ENCODE measurements at regions of chr4 and their contacts with region 1.

Region 1: GRCh38 chr4:82430193-82430963 is at the starts of genes ENOPH1 and HNRNPDL:
- DNase-seq: peak; percentile 98
- ATAC-seq: peak; percentile 91
- total RNA-seq, gene ENOPH1: 12.8 TPM
- total RNA-seq, gene HNRNPDL: 104 TPM

Region 2: GRCh38 chr4:82217986-82218715 is 212.2 kb before region 1 on chr4:
- intact Hi-C with region 1: no loop called
- DNase-seq: no peak
- ATAC-seq: no peak

Region 3: DNA sequence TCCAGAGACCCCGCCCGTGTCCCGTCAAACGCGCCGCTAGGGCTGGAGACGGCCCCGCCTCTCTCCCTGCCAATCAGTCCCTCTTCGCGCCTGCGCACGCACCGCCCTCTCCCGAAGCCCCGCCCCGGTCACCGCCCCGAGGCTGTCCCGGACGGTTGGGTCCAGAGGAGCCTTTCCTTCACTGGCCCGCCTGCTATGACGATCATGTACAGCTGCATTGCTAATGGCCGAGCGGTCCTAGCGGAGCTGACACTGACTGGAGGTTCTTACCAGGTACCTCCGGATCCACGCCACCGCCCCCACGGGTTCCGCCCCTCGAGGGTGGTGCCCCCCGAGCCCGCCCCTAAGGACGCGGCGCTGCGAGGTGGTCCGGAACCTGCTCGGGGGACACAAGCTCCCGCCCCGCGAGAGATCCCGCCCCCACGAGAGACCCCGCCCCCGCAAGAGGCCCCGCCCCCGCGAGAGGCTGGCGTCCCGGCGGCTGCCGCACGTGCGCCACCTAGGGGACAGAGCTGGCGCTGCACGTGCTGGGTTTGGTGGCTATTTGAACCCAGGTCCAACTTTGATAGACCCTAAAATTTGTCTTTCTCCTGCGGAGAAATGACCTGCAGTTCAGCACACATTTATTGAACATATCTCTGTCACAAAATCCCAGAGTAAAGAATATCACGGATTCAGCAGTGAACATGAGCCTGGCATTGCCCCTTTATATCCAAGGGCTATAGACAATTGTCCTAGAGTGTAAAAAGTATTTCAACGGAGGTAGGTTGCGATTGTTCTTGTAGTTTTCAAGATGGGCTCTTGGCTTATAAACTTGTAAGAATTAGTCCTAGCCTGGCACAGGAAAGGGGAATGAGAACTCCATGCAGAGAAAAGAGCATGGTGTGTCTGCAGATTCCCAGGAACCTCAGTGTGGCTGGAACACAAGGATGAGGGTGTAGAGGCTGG is 145.2 kb before region 1 on chr4:
- intact Hi-C with region 1: loop called (anchors 10 kb)
- DNase-seq: peak; percentile 99
- ATAC-seq: peak; percentile 99

Region 4: GRCh38 chr4:82373816-82374625 is 56.4 kb before region 1 on chr4 and contains the start of gene HNRNPD:
- intact Hi-C with region 1: loop called (anchors 2 kb)
- DNase-seq: peak; percentile 99
- ATAC-seq: peak; percentile 91
- total RNA-seq, gene HNRNPD: 110 TPM

Region 5: GRCh38 chr4:82890901-82891706 is 460.7 kb after region 1 on chr4 and contains the start of gene SEC31A:
- intact Hi-C with region 1: loop called (anchors 10 kb)
- DNase-seq: peak; percentile 98
- ATAC-seq: peak; percentile 99
- total RNA-seq, gene SEC31A: 82.1 TPM

Measured in Right ventricle myocardium superior (tissue), 1 donor.